ENCODE measurements at regions of chr11 and their contacts with region 1.

Region 1: GRCh38 chr11:40129266-40129665 is 1330.2 kb downstream of the LRRC4C start:
- DNase-seq: peak in 1 of 2 experiments; percentile 18
- H3K4me3 ChIP-seq: no peak overlapping the region
- H3K4me3 Mint-ChIP-seq: no peak overlapping the region
- H3K27ac Mint-ChIP-seq: no peak overlapping the region
- H3K4me1 ChIP-seq: no peaks in the 10 kb centered on the region
- H3K4me1 Mint-ChIP-seq: peaks cover 7% of the 10 kb centered on the region
- H3K27me3 ChIP-seq: no peaks in the 10 kb centered on the region
- H3K27me3 Mint-ChIP-seq: peaks cover 9% of the 10 kb centered on the region
- CTCF ChIP-seq: peak; percentile 39 to 47

Region 2: GRCh38 chr11:39374963-39375698 is 754.1 kb before region 1 on chr11:
- CTCF ChIA-PET with region 1: no interaction called
- POLR2A ChIA-PET with region 1: no interaction called
- intact Hi-C with region 1: loop called (anchors 2 kb)
- DNase-seq: peak in 1 of 2 experiments; percentile 53
- H3K4me3 ChIP-seq: no peak overlapping the region
- H3K4me3 Mint-ChIP-seq: no peak overlapping the region
- H3K27ac Mint-ChIP-seq: no peak overlapping the region
- H3K4me1 ChIP-seq: no peaks in the 10 kb centered on the region
- H3K4me1 Mint-ChIP-seq: no peaks in the 10 kb centered on the region
- H3K27me3 ChIP-seq: no peaks in the 10 kb centered on the region
- H3K27me3 Mint-ChIP-seq: no peaks in the 10 kb centered on the region
- CTCF ChIP-seq: peak; percentile 44 to 64

Region 3: DNA sequence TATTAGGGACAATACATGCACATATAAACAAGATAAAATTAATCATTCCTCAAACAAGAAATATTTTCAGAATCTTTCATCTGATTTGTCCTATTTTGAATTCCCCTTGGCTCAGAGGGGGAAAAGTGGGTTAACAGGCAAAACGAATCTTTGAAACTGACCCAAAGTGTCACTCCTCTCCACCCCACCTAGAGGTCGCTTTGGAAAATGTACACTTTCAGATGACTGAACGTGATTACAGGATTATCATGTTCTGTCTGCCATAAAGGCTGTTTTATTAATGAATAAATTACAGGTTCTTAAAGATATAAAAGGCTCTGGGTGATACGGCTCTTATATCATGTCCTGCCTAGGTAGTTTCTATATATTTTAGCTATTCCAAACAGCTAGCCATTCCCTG is 404.9 kb before region 1 on chr11:
- CTCF ChIA-PET with region 1: no interaction called
- POLR2A ChIA-PET with region 1: no interaction called
- intact Hi-C with region 1: loop called (anchors 10 kb)
- DNase-seq: peak in 1 of 2 experiments; percentile 34
- H3K4me3 ChIP-seq: no peak overlapping the region
- H3K4me3 Mint-ChIP-seq: no peak overlapping the region
- H3K27ac Mint-ChIP-seq: no peak overlapping the region
- H3K4me1 ChIP-seq: peaks cover 14% of the 10 kb centered on the region
- H3K4me1 Mint-ChIP-seq: peaks cover 23% of the 10 kb centered on the region
- H3K27me3 ChIP-seq: no peaks in the 10 kb centered on the region
- H3K27me3 Mint-ChIP-seq: no peaks in the 10 kb centered on the region
- CTCF ChIP-seq: peak; percentile 29 to 55

Region 4: DNA sequence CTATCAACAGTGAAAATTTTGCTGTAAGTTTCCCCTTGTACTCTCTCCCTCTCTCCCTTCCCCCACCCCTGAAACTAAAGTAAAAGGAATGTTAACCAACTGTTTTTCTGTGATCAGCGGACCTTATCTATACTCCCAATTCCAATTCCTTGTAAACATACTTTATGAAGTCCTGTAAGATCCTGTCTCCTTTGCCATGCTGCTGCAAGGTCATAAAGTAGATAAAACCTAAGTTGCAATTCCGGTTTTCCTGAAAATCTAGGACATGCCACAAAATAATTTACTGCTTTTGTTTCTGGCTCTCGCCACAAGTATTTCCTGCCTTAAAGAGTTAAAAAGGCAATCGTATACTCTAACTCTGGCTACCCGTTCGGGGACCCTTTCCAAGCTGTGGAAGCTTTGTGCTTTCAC is 138.8 kb before region 1 on chr11:
- CTCF ChIA-PET with region 1: no interaction called
- POLR2A ChIA-PET with region 1: no interaction called
- intact Hi-C with region 1: loop called (anchors 1 kb)
- DNase-seq: peak; percentile 56 to 64
- H3K4me3 ChIP-seq: no peak overlapping the region
- H3K4me3 Mint-ChIP-seq: peak overlapping the region; percentile 64
- H3K27ac Mint-ChIP-seq: peak overlapping the region; percentile 87
- H3K4me1 ChIP-seq: peaks cover 30% of the 10 kb centered on the region
- H3K4me1 Mint-ChIP-seq: peaks cover 22% of the 10 kb centered on the region
- H3K27me3 ChIP-seq: no peaks in the 10 kb centered on the region
- H3K27me3 Mint-ChIP-seq: no peaks in the 10 kb centered on the region
- CTCF ChIP-seq: no peak

Region 5: GRCh38 chr11:40183073-40184064 is 54.1 kb after region 1 on chr11:
- CTCF ChIA-PET with region 1: no interaction called
- POLR2A ChIA-PET with region 1: no interaction called
- intact Hi-C with region 1: no loop called
- DNase-seq: no peak
- H3K4me3 ChIP-seq: no peak overlapping the region
- H3K4me3 Mint-ChIP-seq: no peak overlapping the region
- H3K27ac Mint-ChIP-seq: no peak overlapping the region
- H3K4me1 ChIP-seq: no peaks in the 10 kb centered on the region
- H3K4me1 Mint-ChIP-seq: no peaks in the 10 kb centered on the region
- H3K27me3 ChIP-seq: no peaks in the 10 kb centered on the region
- H3K27me3 Mint-ChIP-seq: peaks cover 4% of the 10 kb centered on the region
- CTCF ChIP-seq: no peak

Region 6: GRCh38 chr11:40293655-40294348 is 164.5 kb after region 1 on chr11:
- CTCF ChIA-PET with region 1: interaction called, 4 read pairs
- POLR2A ChIA-PET with region 1: no interaction called
- intact Hi-C with region 1: loop called (anchors 1 kb)
- DNase-seq: peak; percentile 63 to 78
- H3K4me3 ChIP-seq: peak overlapping the region; percentile 43
- H3K4me3 Mint-ChIP-seq: peak overlapping the region; percentile 78
- H3K27ac Mint-ChIP-seq: no peak overlapping the region
- H3K4me1 ChIP-seq: no peaks in the 10 kb centered on the region
- H3K4me1 Mint-ChIP-seq: peaks cover 10% of the 10 kb centered on the region
- H3K27me3 ChIP-seq: no peaks in the 10 kb centered on the region; the same call in 1 of the 2 replicates
- H3K27me3 Mint-ChIP-seq: peaks cover 12% of the 10 kb centered on the region
- CTCF ChIP-seq: peak; percentile 89 to 93

Measured in Caco-2 (cell line).